Dorsolateral prefrontal cortex (tissue), 120 donors: ENCODE measurements at regions of chr19 and their contacts with region 1.

Region 1: DNA sequence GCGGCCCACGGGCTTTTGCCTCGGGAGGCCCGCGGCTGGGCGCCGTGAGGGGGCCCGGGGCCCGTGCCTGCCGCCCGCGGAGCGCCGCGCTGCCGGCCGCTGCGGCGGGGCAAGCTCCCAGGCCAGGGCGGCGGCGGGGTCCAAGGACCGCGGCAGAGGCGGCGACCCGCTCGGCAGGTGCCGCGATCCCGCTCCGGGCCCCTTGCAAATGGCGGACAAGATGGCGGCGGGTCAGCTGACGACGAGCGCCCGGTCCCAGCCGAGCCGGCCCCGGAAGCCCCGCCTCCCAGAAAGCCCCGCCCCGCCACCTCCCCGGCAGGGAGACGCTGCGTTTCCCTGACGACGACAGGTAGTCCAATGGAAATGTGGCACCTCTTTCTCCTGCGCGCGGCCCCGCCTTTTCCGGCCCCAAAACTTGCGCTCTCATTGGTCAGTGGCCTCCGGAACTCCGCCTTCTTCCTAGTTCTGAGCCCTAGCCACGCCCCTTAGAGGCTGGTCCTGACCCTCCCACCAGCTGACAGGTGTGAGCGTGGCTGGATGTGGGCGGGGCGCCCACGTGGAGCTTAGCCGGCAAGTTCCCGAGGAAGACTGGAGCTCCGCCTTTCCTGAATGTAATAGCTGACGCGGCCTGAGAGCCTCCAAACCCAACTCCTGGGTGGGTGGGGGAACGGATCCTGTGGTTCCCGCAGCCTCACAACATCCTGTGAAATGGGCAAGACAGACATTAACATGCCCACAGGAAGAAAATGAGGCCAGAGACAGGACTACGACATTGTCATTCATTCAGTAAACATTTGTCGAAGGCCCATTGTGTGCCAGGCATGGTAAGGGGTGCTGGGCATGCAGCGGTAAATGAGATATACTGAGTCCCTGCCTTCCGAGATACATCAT is at the start of gene AP3D1:
- DNase-seq: peak; percentile 97 to 100 (median 99)
- H3K4me3 ChIP-seq: peak within 1 kb of the TSS; percentile 71 to 100 (median 97)
- H3K27ac ChIP-seq: peak within 1 kb of the TSS in 58 of 59 donors; percentile 49 to 94 (median 85)
- H3K27me3 ChIP-seq: no peaks in the 10 kb centered on the region
- CTCF ChIP-seq: peak in 16 of 56 donors; percentile 3 to 38 (median 19)
- total RNA-seq, gene AP3D1: 94.6 to 174 (median 127) TPM

Region 2: GRCh38 chr19:2096480-2097329 is 54.9 kb before region 1 on chr19 and contains the start of gene IZUMO4:
- intact Hi-C with region 1: loop called (anchors 2 to 5 kb)
- DNase-seq: peak; percentile 97 to 100 (median 99)
- H3K4me3 ChIP-seq: peak within 1 kb of the TSS; percentile 62 to 100 (median 83)
- H3K27ac ChIP-seq: peak within 1 kb of the TSS; percentile 83 to 99 (median 96)
- H3K27me3 ChIP-seq: no peaks in the 10 kb centered on the region
- CTCF ChIP-seq: peak in 53 of 56 donors; percentile 19 to 66 (median 48)
- total RNA-seq, gene IZUMO4: 8.6 to 54.6 (median 25.5) TPM

Region 3: DNA sequence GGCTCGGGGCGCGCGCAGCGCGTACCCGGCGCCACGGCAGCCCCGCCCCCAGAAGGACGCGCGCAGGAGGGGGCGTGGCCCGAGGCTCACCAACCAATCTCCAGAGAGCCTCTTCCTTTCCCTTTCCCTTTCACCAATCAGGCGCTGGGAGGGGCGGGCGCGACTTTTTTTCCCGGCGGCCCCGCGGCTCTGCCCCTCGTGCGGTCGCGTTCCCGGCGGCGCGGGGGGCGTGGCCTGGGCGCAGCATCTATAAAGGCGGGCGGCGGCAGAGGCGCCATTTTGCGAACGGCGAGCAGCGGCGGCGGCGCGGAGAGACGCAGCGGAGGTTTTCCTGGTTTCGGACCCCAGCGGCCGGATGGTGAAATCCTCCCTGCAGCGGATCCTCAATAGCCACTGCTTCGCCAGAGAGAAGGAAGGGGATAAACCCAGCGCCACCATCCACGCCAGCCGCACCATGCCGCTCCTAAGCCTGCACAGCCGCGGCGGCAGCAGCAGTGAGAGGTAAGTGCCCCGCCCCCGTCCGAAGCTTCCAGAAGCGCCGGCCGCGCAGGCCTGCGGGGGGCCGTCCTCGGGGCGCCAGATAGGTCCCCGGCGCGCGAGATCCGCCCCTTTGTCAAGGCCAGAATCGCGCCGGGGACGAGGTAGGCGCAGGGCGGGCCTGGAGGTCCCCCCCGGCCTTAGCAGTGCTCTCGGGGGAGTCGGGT is 117.8 kb after region 1 on chr19:
- intact Hi-C with region 1: loop called (anchors 2 kb)
- DNase-seq: peak; percentile 95 to 99 (median 98)
- H3K4me3 ChIP-seq: peak overlapping the region; percentile 54 to 100 (median 98)
- H3K27ac ChIP-seq: peak overlapping the region; percentile 86 to 99 (median 98)
- H3K27me3 ChIP-seq: no peaks in the 10 kb centered on the region
- CTCF ChIP-seq: peak in 40 of 56 donors; percentile 11 to 50 (median 32)

Region 4: DNA sequence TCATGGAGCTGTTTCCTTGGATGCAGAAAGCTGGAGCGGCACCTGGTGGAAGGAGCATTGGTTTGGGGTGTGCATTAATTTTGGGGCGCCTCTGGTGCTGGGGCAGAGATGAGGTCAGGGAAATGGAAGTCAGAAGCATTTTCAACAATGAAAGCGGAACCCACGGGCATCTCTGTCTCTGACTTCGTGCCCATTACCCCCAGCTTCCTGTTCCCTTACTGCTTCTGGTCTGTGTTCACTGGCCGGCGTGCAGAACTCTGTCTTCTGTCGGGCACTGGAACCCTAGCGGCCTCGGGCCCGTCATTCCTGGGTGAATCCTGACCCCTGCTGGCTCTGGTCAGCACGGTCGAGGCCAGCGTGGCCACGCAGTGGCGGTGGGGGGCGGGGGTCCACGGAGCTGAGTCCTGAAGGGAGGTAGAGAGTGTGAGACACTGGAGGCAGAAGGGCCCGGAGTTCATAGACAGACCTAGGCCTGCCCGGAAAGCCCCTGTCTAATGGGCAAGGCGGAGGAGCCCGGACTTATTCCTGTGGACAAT is 164.3 kb after region 1 on chr19:
- intact Hi-C with region 1: loop called (anchors 2 to 5 kb)
- DNase-seq: peak in 8 of 10 donors; percentile 61 to 81 (median 74)
- H3K4me3 ChIP-seq: no peak overlapping the region
- H3K27ac ChIP-seq: peak overlapping the region in 18 of 59 donors; percentile 8 to 60 (median 30)
- H3K27me3 ChIP-seq: peaks cover 0 to 10% (median 0%) of the 10 kb centered on the region in 45 donors
- CTCF ChIP-seq: peak; percentile 29 to 88 (median 76)

Region 5: DNA sequence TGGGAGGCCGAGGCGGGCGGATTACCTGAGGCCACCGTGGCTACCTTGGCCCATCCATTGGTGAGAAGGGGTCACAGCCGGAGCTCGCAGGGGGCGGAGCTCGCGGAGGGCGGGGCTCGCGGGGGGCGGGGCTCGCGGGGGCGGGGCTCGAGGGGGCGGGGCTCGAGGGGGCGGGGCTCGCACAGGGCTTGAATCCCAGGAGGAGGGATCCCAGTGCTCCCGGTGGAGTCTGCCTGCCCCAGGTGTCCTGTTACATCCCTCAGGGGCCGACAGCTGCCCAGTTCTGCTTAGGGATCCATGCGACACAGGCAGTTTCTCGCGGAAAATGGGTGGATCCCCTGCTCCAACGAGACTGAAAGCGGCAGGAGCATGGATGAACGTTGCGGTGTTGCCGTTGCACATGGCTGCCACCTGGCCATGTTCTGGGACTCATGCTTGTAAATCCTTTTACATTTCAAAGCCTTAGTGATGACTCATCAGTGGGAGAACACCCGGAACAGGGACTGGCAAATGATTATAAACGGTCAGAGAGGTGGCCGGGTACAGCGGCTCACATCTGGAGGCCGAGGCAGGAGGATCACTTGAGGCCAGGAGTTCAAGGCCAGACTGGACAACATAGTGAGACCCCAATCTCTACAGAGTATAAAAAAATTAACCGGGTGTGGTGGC is 233.6 kb after region 1 on chr19:
- intact Hi-C with region 1: loop called (anchors 5 kb)
- DNase-seq: peak in 3 of 10 donors; percentile 7 to 50 (median 20)
- H3K4me3 ChIP-seq: peak overlapping the region in 6 of 59 donors; percentile 7 to 30 (median 13)
- H3K27ac ChIP-seq: no peak overlapping the region
- H3K27me3 ChIP-seq: peaks cover 0 to 9% (median 0%) of the 10 kb centered on the region in 45 donors
- CTCF ChIP-seq: no peak

Region 6: GRCh38 chr19:2391118-2391725 is 239.6 kb after region 1 on chr19:
- intact Hi-C with region 1: loop called (anchors 5 kb)
- DNase-seq: peak in 4 of 10 donors; percentile 13 to 52 (median 38)
- H3K4me3 ChIP-seq: no peak overlapping the region
- H3K27ac ChIP-seq: no peak overlapping the region
- H3K27me3 ChIP-seq: peaks cover 0 to 9% (median 0%) of the 10 kb centered on the region in 45 donors
- CTCF ChIP-seq: peak; percentile 61 to 91 (median 81)